Calu3 (cell line): ENCODE measurements at regions of chr11 and their contacts with region 1.

Region 1: DNA sequence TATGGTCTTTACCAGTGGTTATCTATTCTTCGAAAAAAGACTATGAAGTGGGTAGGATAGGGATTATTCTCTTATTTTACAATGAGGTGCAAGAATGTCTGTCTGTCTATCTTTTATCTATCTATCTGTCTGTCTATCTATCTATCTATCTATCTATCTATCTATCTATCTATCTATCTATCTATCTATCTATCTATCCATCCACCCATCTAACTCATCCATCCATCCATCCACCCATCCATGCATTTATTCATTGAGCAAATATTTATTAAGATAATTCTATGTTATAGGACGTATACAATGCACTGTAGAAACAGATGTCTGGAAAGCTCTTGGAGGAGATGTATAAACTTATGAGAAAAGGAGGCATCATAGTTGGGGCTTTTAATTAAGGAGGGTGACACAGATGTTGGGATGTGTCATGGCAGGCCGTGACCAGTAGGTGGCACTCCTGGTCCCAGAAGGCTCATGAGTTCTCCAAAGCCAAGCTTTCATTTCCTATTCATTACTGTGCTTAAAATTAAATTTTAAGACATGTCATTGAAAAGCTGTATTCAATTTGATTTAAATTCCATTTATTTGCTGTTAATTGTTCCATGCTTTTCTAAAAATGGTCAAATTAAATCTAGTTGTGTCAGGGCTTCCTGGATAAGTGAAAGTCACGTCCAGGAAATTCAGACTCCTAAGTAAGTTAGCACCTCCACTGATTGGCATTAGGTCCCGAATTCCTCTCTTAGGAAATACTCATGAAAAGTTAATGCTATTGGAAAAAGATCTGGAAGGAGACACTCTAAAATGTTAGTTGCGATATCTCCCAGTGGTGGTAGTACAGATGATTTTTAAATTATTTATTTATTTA is 19.0 kb upstream of the E2F8 start:
- DNase-seq: peak; percentile 76
- H3K4me3 Mint-ChIP-seq: no peak overlapping the region
- H3K27ac Mint-ChIP-seq: no peak overlapping the region
- H3K4me1 Mint-ChIP-seq: no peaks in the 10 kb centered on the region
- H3K27me3 Mint-ChIP-seq: peaks cover 25% of the 10 kb centered on the region
- CTCF ChIP-seq: peak; percentile 91

Region 2: DNA sequence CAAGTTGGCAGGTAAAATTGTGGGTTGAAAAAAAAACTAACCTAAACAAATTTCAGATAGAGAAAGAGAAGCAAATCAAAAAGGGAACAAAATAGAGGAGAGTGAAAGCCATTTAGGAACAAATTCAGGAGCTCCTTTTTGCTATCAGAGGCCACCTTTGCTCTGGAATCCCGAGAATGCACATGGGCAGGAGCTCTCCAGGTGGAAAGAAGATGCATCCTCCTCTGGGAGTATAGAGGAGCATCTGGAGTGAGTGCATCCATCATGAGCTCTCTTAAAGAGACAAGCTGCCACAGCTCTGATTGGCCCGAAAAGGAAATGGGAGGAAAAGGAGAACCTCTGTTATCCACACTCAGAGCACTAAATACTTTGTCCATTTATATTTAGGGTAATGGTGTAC is 346.8 kb before region 1 on chr11:
- CTCF ChIA-PET with region 1: no interaction called
- intact Hi-C with region 1: no loop called
- DNase-seq: no peak
- H3K4me3 Mint-ChIP-seq: no peak overlapping the region
- H3K27ac Mint-ChIP-seq: no peak overlapping the region
- H3K4me1 Mint-ChIP-seq: no peaks in the 10 kb centered on the region
- H3K27me3 Mint-ChIP-seq: peaks cover 80% of the 10 kb centered on the region
- CTCF ChIP-seq: no peak

Region 3: DNA sequence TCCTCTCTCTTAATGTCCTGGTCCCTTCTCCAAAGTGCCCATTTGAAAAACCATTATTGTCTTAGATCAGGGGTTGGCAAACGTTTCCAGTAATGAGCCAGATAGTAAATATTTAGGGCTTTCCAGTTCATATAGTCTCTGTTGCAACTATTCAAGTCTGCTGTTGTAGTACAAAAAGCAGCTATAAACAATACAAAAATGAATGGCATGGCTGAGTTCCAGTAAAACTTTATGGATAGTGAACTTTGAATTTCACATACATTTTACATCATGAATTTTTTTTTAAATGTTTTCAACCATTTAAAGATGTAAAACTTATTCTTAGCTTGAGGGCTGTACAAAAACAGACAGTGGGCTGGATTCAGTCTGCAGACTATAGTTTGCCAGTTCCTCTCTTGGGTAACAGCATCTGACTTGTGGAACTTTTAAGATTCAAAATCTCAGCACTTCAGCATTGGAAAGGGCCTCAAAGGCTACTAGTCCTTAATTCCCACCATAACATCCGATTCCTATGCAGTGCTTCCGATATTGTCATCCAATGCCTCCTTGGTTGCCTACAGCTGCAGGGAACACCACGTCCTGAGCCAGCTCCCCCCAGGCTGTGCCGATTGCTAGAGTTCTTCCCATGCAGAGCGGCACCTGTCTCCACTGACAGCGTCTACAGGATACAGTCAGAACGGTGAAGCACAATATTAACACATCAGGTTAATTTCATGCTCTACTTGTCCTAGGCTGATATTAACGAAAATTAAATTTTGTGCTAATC is 46.6 kb after region 1 on chr11:
- CTCF ChIA-PET with region 1: no interaction called
- intact Hi-C with region 1: loop called (anchors 5 kb)
- DNase-seq: no peak
- H3K4me3 Mint-ChIP-seq: no peak overlapping the region
- H3K27ac Mint-ChIP-seq: no peak overlapping the region
- H3K4me1 Mint-ChIP-seq: no peaks in the 10 kb centered on the region
- H3K27me3 Mint-ChIP-seq: peaks cover 87% of the 10 kb centered on the region
- CTCF ChIP-seq: no peak

Region 4: GRCh38 chr11:19441752-19442553 is 182.2 kb after region 1 on chr11:
- CTCF ChIA-PET with region 1: no interaction called
- intact Hi-C with region 1: loop called (anchors 10 kb)
- DNase-seq: peak; percentile 84
- H3K4me3 Mint-ChIP-seq: peak overlapping the region; percentile 49
- H3K27ac Mint-ChIP-seq: peak overlapping the region; percentile 69
- H3K4me1 Mint-ChIP-seq: peaks cover 54% of the 10 kb centered on the region
- H3K27me3 Mint-ChIP-seq: peaks cover 10% of the 10 kb centered on the region
- CTCF ChIP-seq: no peak

Region 5: GRCh38 chr11:19553683-19554333 is 294.1 kb after region 1 on chr11:
- CTCF ChIA-PET with region 1: interaction called, 3 read pairs
- intact Hi-C with region 1: loop called (anchors 2 kb)
- DNase-seq: peak; percentile 86
- H3K4me3 Mint-ChIP-seq: no peak overlapping the region
- H3K27ac Mint-ChIP-seq: no peak overlapping the region
- H3K4me1 Mint-ChIP-seq: peaks cover 8% of the 10 kb centered on the region
- H3K27me3 Mint-ChIP-seq: peaks cover 70% of the 10 kb centered on the region
- CTCF ChIP-seq: peak; percentile 78